ENCODE measurements at regions of chr6 and their contacts with region 1.

Region 1: DNA sequence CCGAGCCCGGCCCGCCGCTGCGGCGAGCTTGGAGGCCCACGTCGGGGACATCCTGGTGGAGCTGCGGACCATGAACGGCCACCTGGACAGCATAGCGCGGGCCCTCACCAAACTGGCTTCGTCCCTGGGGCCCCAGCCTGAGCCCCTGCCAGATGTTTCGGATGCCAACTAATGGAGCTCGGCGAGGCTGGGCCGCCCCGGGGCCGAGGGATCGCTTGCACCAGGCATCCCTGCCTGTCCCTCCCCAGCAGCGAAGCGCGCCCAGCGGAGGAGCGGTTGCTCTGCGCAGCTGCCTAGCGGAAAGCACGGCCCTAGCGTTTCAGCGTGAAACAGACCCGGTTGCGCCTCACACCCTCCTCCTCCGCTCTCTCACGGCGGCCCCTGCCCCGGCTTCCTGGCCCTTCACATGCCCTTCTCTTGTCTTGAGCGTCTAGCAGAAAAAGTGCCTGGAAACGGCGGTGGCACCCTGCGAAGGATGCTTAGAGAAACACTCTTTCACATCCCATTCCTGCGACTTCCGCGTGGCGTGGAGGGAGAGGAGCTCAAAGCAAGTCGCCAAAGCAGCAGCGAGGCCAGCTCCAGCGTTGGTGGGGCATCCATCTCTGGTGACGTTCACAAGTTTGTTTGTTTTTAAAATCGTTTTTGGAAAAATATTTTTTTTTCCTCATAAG is 286.0 kb upstream of the SUPT3H start:
- DNase-seq: peak; percentile 85

Region 2: GRCh38 chr6:44969446-44970185 is 694.1 kb before region 1 on chr6:
- intact Hi-C with region 1: loop called in 1 of 2 experiments (anchors 5 kb)
- DNase-seq: no peak

Region 3: GRCh38 chr6:45677381-45678284 is 13.9 kb after region 1 on chr6:
- intact Hi-C with region 1: no loop called
- DNase-seq: no peak